ENCODE measurements at regions of chr2 and their contacts with region 1.

Region 1: DNA sequence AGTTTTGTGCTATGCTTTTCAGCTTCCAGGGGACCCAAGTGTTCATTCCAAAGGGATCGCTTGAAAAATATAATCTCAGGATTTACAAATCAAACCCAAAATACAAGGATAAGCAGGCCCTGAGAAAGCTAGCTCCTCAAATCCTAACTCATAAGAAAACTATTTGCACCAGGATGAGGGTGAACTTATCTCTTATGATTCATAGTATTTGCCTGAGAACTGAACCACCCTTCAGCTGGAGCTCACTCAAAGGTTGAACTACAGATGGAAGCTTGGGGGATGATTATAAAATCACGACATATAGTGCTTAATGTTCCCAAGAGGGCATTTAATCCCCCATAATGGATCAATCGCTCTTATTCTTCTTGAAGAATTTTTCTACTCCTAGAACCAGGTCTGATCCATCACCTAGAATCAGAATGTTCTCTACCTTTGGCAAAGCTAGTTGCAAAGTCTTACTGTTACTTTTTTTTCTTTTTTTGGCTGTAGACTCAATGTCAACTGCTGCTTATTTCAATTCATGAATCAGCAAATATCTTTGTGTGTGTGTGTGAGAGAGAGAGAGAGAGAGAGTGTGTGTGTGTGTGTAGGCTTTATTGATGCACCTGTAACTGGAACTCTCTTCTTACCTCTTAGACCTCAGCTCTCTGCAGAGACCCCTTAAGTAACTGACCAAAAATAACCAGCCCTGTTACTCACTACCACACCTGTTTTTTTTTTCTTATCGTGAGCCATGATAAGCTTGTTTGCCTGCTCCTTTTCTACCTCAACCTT is 44.8 kb downstream of the ARL4C start:
- DNase-seq: no peak
- H3K4me3 Mint-ChIP-seq: peak overlapping the region; percentile 91
- H3K27ac Mint-ChIP-seq: peak overlapping the region; percentile 92
- H3K4me1 Mint-ChIP-seq: peaks cover 83% of the 10 kb centered on the region
- H3K27me3 Mint-ChIP-seq: no peaks in the 10 kb centered on the region

Region 2: DNA sequence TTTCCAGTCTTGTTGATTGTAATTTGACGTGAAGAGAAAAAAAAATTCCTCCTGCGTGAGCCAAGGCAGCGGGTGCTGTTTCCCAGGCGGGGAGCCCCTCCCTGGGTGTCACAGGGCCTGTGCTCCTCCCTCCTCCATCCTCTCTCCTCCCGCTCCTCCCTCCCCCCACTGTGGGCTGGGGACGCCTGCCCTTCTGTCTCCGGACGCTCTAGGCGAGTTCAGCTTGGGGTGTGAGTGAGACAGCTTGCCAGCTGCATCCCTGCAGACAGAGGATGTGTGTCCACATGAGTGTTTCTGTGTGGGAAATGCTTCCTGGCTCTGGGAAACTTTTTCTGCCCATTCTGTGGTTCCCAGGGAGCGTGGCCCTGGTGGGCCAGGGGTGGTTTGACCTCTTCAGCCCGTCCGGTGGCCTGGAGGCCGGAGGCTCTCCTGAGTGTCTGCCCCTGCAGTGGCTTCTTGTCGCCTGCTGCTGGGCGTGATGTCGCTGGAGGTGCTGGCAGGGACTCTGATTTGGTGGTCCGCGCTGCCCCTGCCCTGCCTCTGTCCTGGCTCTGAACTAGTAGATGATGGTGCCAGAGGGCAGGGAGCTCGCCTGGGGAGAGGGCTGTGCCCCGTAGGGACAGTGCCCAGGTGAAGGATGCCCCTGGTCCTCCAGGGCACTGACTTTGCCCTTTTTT is 981.9 kb before region 1 on chr2:
- intact Hi-C with region 1: no loop called
- DNase-seq: no peak
- H3K4me3 Mint-ChIP-seq: no peak overlapping the region
- H3K27ac Mint-ChIP-seq: no peak overlapping the region
- H3K4me1 Mint-ChIP-seq: no peaks in the 10 kb centered on the region
- H3K27me3 Mint-ChIP-seq: no peaks in the 10 kb centered on the region

Region 3: GRCh38 chr2:234241656-234242458 is 210.2 kb before region 1 on chr2:
- intact Hi-C with region 1: no loop called
- DNase-seq: no peak
- H3K4me3 Mint-ChIP-seq: no peak overlapping the region
- H3K27ac Mint-ChIP-seq: no peak overlapping the region
- H3K4me1 Mint-ChIP-seq: peaks cover 10% of the 10 kb centered on the region
- H3K27me3 Mint-ChIP-seq: peaks cover 7% of the 10 kb centered on the region

Region 4: DNA sequence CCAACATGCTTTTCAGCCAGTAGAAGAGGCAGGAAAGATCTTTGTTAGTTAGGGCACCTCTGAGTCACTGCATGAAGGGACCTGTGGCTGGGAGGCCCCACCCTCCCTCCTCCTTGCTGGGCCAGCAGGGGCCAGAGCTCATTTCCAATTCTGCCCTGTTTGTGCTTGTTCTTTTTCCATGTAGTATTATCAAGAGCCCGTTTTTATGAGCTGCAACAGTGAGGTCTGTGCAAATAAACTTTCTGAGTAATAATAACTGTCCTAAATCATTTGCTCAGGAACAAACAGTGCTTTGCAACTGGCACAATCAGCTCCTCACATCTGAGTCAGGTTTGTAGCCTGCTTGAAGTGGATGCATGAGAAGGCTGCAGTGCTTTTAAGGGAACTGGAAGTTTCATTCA is 83.2 kb before region 1 on chr2:
- intact Hi-C with region 1: loop called (anchors 5 kb)
- DNase-seq: peak; percentile 34
- H3K4me3 Mint-ChIP-seq: no peak overlapping the region
- H3K27ac Mint-ChIP-seq: peak overlapping the region; percentile 75
- H3K4me1 Mint-ChIP-seq: peaks cover 66% of the 10 kb centered on the region
- H3K27me3 Mint-ChIP-seq: no peaks in the 10 kb centered on the region

Region 5: GRCh38 chr2:234463626-234464290 is 11.7 kb after region 1 on chr2:
- intact Hi-C with region 1: loop called (anchors 1 kb)
- DNase-seq: peak; percentile 76
- H3K4me3 Mint-ChIP-seq: peak overlapping the region; percentile 81
- H3K27ac Mint-ChIP-seq: peak overlapping the region; percentile 91
- H3K4me1 Mint-ChIP-seq: peaks cover 57% of the 10 kb centered on the region
- H3K27me3 Mint-ChIP-seq: no peaks in the 10 kb centered on the region

Region 6: DNA sequence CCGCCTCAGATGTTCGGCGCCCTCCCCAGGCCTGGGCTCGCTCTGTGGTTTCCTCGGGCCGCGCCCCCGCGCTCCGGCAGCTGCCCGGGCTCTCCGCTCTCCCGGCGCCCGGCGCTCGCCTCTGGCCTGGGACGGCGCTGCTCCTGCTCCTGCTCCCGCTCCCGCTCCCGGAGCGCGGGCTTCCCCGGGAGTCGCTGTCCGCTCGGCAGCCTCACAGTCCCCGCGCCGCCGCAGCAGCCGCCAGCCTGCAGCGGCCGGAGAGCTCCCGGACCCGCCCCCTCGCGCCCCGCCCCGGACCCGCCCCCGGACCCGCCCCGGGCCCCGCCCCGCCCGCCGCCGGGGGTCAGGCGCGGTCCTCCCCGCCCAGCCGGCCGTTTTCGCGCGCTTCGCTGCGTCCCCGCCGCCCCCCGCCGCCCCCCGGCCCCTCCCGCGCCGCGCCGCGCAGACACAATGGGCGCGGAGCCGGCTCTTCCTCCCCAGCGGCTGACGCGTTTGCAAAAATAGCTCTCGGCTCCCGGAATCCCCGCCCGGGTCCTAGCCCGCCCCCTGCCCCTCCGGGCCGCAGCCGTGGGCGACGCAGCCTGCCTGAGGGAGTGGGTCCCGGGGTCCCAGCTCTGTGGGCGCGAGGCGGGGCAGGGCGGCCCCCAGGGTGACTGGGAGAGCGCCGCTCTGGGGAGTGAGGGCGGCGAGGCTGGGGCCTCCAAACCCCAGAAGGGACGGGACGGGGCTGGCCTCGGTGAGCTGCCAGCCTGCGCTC is 45.0 kb after region 1 on chr2 and contains the start of gene ARL4C:
- intact Hi-C with region 1: no loop called
- DNase-seq: peak; percentile 52
- H3K4me3 Mint-ChIP-seq: peak within 1 kb of the TSS; percentile 97
- H3K27ac Mint-ChIP-seq: peak within 1 kb of the TSS; percentile 96
- H3K4me1 Mint-ChIP-seq: peaks cover 43% of the 10 kb centered on the region
- H3K27me3 Mint-ChIP-seq: peaks cover 5% of the 10 kb centered on the region
- total RNA-seq, gene ARL4C: 44.6 and 45.7 TPM in 2 replicates